ENCODE measurements at regions of chr4 and their contacts with region 1.

Region 1: DNA sequence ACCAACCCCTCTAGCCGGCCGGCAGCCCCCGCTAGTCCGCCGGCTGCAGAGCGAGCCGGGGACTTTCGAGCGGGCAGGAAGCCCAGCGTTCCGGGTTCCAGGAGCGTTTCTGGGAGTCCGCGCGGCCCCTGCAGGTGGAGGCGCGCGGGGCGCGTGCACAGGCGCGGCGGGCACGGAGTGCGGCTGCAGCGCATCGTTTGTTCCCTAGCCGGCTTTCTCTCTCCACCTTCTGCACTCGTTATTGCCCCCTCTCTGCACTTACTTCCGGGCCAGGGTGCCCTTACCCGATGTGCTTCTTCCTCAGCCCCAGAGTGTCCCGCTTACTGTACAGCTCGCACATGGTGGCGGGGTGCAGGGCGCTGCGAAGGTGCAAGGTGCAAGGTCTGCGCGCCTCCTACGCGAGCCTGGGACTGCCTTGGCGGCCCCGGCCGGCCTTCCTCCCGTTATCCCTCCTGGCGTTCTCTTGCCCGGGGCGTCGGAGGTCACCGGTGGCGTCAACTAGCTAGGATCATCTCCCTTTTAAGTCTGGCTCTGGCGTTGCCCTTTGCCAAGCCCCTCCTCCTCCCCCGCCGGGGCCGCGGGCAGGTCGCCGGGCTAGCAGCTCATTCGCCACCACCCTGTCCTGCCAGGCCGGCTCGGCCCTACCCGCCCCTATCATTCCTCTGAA is at the start of gene ETNPPL:
- DNase-seq: no peak
- ATAC-seq: peak; percentile 74
- total RNA-seq, gene ETNPPL: 20.3 TPM

Region 2: GRCh38 chr4:108834835-108835384 is 72.2 kb after region 1 on chr4:
- intact Hi-C with region 1: loop called (anchors 2 kb)
- DNase-seq: no peak
- ATAC-seq: no peak

Measured in Right ventricle myocardium inferior (tissue), 1 donor.